GM13976 (cell line): ENCODE measurements at regions of chr10 and their contacts with region 1.

Region 1: DNA sequence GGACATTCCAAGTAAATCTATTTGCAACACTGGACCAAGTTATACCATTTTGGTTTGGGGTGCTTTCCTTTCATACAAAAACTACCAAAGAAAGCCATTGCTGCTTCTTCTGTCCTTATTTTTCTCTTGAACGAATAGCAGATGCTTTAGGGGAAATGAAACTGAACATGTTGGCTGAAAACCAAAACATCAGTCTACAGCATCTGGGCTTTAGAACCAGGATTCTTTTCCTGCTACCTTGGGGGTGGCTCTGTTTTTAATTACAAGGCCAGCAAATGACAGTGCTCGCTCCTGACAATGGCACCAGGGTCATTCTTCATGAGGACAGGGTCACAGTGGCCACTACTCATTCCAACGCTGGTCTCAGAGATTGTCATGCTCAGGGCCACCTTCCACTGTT is 80.3 kb downstream of the WDR11 start:
- DNase-seq: no peak
- CTCF ChIP-seq: no peak

Region 2: DNA sequence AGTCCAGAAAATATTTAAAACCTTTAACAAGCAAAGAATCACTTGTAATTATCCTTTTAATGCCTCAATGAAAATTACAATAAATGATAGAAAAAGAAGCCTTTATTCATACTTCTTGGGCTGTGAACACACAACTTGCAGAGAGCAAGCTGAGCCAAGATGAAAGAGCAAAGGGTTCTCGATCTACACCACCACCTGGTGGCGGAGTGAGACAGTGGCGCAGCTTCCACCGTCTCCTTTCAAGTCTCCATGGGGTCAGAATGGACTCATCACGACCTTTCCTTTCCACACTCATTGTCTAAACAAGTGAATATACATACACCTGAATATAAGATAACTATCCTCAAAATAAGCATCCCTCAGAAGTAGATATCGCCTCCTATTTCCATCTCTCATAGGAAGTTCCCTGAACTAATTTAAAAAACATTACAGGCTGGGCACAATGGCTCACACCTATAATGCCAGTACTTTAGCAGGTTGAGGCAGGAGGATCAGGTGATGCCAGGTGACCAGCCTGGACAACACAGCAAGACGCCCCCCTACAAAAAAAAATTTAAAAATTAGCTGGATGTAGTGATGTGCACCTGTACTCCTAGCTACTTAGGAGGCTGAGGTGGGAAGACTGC is 955.7 kb after region 1 on chr10:
- in situ Hi-C with region 1: loop called (anchors 10 kb)
- DNase-seq: peak; percentile 60
- CTCF ChIP-seq: peak; percentile 80